Activated CD4-positive, alpha-beta memory T cell treated with anti-CD3 and anti-CD28 coated beads, Interleukin-2, amount 10 ng/mL, durations not matched to agents 7 days and 5 days (primary cell): ENCODE measurements at regions of chr14 and their contacts with region 1.

Region 1: DNA sequence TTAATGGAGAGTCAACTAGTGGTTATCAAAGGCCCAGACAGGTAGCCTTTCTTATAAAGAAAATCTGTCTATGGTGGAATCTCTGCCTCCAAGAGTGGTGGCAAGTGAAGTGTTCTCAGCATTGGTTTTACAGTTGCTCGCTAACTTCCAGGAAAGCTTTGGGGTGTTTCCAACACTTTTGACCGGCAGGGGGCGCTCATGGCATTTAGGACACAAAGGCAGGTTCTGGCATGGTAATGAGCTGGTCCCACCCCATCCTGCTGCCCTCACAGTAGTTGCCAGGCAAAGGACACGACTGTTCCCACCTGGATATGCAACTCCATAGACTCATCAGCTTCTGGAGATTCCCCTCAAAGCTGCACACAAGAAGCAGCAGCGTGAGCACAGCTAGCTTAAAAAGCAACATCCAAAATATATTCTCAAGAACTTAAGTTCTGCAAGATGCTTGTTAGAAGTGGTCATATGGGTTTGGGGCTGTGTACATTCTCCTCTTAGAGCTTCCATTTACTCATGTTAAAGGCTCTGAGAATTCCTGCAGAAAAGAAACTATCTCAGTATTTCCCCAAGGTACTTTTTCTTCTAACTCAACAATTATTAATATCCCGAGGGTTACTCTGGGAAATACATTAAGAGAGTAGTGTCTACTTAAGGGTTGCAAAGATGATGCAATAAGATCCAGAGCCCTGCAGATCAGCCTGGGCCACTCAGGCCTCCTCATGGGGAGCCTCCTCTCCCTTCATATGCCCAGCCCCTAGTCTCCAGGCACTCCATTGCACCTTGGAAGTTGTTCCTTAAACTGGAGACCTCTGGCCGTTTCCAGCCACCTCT is 14.8 kb downstream of the PROX2 start:
- DNase-seq: peak; percentile 91
- H3K4me3 Mint-ChIP-seq: no peak overlapping the region
- H3K27ac Mint-ChIP-seq: no peak overlapping the region
- H3K4me1 Mint-ChIP-seq: peaks cover under 1% of the 10 kb centered on the region
- H3K27me3 Mint-ChIP-seq: no peaks in the 10 kb centered on the region

Region 2: GRCh38 chr14:74658537-74659130 is 202.5 kb before region 1 on chr14:
- CTCF ChIA-PET with region 1: no interaction called
- POLR2A ChIA-PET with region 1: no interaction called
- DNase-seq: no peak
- H3K4me3 Mint-ChIP-seq: no peak overlapping the region
- H3K27ac Mint-ChIP-seq: no peak overlapping the region
- H3K4me1 Mint-ChIP-seq: no peaks in the 10 kb centered on the region
- H3K27me3 Mint-ChIP-seq: no peaks in the 10 kb centered on the region

Region 3: GRCh38 chr14:74881431-74882361 is 20.6 kb after region 1 on chr14 and contains the start of gene DLST:
- CTCF ChIA-PET with region 1: interaction called, 115 read pairs
- POLR2A ChIA-PET with region 1: interaction called, 42 read pairs
- DNase-seq: peak; percentile 87
- H3K4me3 Mint-ChIP-seq: peak within 1 kb of the TSS; percentile 91
- H3K27ac Mint-ChIP-seq: peak within 1 kb of the TSS; percentile 92
- H3K4me1 Mint-ChIP-seq: peaks cover 61% of the 10 kb centered on the region
- H3K27me3 Mint-ChIP-seq: no peaks in the 10 kb centered on the region
- total RNA-seq, gene DLST: 106 to 108 TPM

Region 4: GRCh38 chr14:74893614-74894091 is 32.5 kb after region 1 on chr14:
- CTCF ChIA-PET with region 1: interaction called, 64 read pairs
- POLR2A ChIA-PET with region 1: no interaction called
- DNase-seq: no peak
- H3K4me3 Mint-ChIP-seq: no peak overlapping the region
- H3K27ac Mint-ChIP-seq: no peak overlapping the region
- H3K4me1 Mint-ChIP-seq: peaks cover 8% of the 10 kb centered on the region
- H3K27me3 Mint-ChIP-seq: no peaks in the 10 kb centered on the region

Region 5: DNA sequence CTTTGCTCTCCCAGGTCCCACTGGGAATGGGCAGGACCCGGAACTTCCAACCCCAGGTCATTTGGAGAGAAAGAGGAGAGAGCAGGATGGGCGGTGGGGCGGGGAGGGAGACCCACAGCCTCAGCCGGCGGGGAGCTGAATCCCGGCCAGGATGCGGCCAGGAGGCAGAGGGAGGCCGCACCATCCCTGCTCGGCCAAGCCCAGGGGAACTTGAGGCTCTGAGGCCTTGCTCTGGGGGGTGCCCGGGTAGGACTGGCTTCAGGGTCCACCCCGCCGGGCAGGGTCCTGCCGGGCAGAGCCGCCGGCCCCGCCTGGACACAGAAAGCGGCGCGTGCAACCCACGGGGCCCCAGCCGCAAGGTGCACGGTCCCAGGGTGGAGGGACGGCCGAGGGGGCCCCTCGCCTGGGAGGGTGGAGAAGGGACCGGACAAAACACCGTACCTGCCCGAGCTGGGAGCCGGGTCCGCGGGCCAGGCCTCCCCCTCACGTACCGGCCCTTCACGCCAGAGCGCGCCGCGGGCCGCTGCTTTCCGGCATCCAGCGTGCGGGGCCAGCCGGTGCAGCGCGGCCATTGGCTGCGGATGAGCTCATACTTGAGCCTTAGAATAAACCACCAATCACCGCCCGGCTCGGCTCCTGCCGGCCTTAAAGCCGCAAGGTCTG is 61.8 kb after region 1 on chr14 and contains the start of gene RPS6KL1:
- CTCF ChIA-PET with region 1: interaction called, 12 read pairs
- POLR2A ChIA-PET with region 1: no interaction called
- DNase-seq: peak; percentile 77
- H3K4me3 Mint-ChIP-seq: peak within 1 kb of the TSS; percentile 66
- H3K27ac Mint-ChIP-seq: no peak within 1 kb of the TSS
- H3K4me1 Mint-ChIP-seq: peaks cover 2% of the 10 kb centered on the region
- H3K27me3 Mint-ChIP-seq: peaks cover 19% of the 10 kb centered on the region
- total RNA-seq, gene RPS6KL1: 3.6 to 3.8 TPM